Aorta (tissue), 5 donors: ENCODE measurements at regions of chrX and their contacts with region 1.

Region 1: GRCh38 chrX:19904778-19905367 is 17.5 kb upstream of the SH3KBP1 start:
- DNase-seq: no peak
- ATAC-seq: peak; percentile 70
- H3K4me3 ChIP-seq: no peak overlapping the region
- H3K27ac ChIP-seq: no peak overlapping the region
- H3K4me1 ChIP-seq: no peaks in the 10 kb centered on the region
- H3K27me3 ChIP-seq: no peaks in the 10 kb centered on the region

Region 2: GRCh38 chrX:19924285-19924684 is 19.4 kb after region 1 on chrX:
- intact Hi-C with region 1: no loop called
- DNase-seq: no peak
- ATAC-seq: no peak
- H3K4me3 ChIP-seq: no peak overlapping the region
- H3K27ac ChIP-seq: peak overlapping the region in 1 of 2 donors; percentile 40
- H3K4me1 ChIP-seq: peaks cover 0 to 2% of the 10 kb centered on the region in 2 donors
- H3K27me3 ChIP-seq: no peaks in the 10 kb centered on the region

Region 3: GRCh38 chrX:19968276-19968675 is 63.4 kb after region 1 on chrX:
- intact Hi-C with region 1: no loop called
- DNase-seq: no peak
- ATAC-seq: no peak
- H3K4me3 ChIP-seq: no peak overlapping the region
- H3K27ac ChIP-seq: no peak overlapping the region
- H3K4me1 ChIP-seq: no peaks in the 10 kb centered on the region
- H3K27me3 ChIP-seq: no peaks in the 10 kb centered on the region

Region 4: DNA sequence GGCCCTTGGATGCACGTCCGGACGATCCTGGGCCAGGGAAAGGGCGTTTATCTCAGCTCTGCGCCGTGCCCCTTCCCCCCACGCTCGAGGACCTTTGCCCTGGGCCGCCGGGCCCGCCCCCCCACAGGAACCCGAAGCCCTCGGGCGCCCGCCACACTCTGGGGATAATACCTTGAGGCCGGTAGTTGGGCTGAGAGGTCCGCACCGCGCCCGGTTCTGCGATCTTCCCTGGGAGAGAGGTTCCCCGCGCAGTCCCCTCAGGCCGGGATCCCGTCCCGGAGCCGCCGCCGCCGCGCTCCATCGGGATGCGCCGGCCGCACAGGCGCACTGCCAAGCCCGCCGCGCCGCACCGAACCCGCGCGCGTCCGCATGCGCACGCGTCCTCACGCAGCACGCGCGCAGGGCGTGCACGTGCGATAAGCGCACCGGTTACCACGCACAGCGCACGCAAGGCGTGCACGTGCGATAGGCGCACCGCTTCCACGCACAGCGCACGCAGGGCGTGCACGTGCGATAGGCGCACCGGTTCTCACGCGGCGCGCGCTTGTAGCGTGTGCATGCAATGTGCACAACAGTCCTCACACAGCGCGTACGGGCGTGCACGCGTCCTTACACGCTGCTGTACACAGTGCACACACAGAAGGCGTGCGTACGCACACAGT is 211.8 kb after region 1 on chrX and contains the start of gene MAP7D2:
- intact Hi-C with region 1: loop called in 1 of 2 experiments (anchors 10 kb)
- DNase-seq: no peak
- ATAC-seq: peak; percentile 36
- H3K4me3 ChIP-seq: no peak within 1 kb of the TSS
- H3K27ac ChIP-seq: no peak within 1 kb of the TSS
- H3K4me1 ChIP-seq: no peaks in the 10 kb centered on the region
- H3K27me3 ChIP-seq: no peaks in the 10 kb centered on the region
- total RNA-seq, gene MAP7D2: 0.23 to 0.36 TPM

Region 5: DNA sequence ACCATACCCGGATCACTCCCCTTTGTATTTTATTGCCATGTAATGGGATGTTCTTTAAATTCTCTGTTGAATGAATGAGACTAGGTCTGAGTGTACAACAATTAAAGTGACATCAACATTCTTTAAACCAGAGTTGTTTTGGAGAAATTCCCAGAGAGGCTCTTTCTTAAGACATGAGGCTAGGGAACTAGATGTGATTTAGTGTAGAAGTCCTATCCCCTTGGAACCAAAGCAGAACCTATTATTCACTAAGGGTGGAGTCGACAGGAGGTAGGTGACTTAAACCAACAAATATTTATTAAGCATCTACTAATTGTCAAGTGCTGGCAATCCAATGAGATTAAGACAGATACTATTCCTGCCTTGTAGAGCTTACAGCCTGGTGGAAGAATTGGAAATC is 235.1 kb after region 1 on chrX:
- intact Hi-C with region 1: loop called in 1 of 2 experiments (anchors 10 kb)
- DNase-seq: no peak
- ATAC-seq: no peak
- H3K4me3 ChIP-seq: peak overlapping the region in 1 of 2 donors; percentile 69
- H3K27ac ChIP-seq: no peak overlapping the region
- H3K4me1 ChIP-seq: no peaks in the 10 kb centered on the region
- H3K27me3 ChIP-seq: no peaks in the 10 kb centered on the region